Sciatic nerve (tissue), 2 donors: ENCODE measurements at regions of chr17 and their contacts with region 1.

Region 1: GRCh38 chr17:7167832-7168231 is 11.3 kb downstream of the ASGR1 start:
- DNase-seq: no peak
- ATAC-seq: peak; percentile 67

Region 2: DNA sequence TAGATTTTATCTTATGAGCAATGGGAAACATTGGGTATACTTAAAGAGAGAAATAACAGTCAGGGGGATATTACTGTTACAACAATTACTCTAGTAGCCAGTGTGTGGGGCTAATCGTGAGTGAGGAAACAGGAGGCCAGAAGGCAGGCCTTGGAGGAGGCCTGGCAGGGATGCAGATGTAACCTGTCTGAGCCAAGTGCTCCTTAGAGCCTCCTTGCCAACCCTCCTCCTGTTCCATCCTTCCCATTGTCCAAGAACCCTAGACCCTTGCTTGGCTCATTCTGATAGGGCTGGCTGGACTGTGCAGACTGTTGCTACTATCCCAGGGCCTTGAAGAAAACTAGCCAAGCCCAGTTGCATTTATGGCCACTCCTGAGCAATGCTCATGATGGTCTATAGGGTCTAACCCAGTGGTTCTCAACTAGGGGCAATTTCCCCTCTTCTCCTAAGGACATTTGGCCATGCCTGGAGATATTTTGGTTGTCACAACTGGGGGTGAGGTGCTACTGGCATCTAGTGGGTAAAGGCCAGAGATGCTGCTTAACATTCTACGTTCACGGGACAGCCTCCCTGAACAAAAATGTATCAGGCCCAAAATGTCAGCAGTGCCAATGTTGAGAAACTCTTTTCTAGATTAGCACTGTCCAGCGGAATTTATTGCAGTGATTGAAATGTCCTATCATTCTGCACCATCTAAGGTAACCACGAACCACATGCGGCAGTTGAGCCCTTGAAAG is 1122.0 kb before region 1 on chr17:
- intact Hi-C with region 1: loop called (anchors 10 kb)
- DNase-seq: no peak
- ATAC-seq: no peak

Region 3: GRCh38 chr17:7114875-7115614 is 52.8 kb before region 1 on chr17:
- intact Hi-C with region 1: no loop called
- DNase-seq: no peak
- ATAC-seq: peak; percentile 65